Activated B cell treated with CpG ODN at 0.5 μM for 24 hours (primary cell): ENCODE measurements at regions of chr3 and their contacts with region 1.

Region 1: DNA sequence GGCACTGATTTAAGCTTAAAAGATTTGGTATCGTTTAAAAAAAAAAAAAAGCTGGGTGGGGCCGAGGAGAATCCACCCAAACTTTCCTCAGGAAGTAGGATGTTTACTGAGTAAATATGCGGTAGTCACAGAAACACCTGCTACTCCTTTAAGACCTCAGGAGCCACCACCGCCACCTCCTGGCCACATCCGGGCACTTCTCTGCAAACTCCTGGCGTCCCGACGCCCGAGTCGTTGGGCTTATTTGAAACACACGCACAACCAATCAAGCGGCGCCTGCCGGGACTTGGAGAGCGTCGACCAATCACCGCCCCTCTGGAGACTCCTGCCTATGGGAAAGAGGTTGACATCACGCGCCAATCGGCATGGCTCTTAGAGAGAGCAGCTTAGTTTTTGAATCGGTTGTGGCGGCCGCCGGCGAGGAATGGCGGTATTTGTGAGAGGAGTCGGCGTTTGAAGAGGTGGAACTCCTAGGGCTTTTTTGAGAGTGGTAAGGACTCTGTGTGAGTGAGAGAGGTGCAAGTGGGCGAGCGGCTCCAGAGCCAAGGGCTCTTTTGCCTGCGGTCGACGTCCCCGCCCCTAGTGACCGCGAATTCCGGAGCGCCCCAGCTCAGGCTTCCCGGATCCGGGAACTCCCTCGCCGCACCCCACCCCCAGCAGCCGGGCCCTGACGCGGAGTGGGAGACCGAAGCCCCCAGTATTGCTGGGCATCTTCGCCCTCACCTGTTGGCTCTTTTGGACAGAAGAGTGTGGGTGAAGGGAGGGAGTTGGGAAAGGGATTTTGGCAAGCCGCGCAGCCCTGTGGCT is at the start of gene ECT2:
- DNase-seq: peak; percentile 84
- ATAC-seq: peak; percentile 99
- H3K4me3 Mint-ChIP-seq: peak within 1 kb of the TSS; percentile 99
- H3K27ac Mint-ChIP-seq: peak within 1 kb of the TSS; percentile 91
- H3K4me1 Mint-ChIP-seq: peaks cover 14% of the 10 kb centered on the region
- H3K27me3 Mint-ChIP-seq: no peaks in the 10 kb centered on the region
- CTCF ChIP-seq: no peak
- total RNA-seq, gene ECT2: 5.0 and 6.3 TPM in 2 replicates

Region 2: GRCh38 chr3:170869645-170870593 is 1880.7 kb before region 1 on chr3 and contains the start of gene RPL22L1:
- CTCF ChIA-PET with region 1: no interaction called
- POLR2A ChIA-PET with region 1: interaction called, 4 read pairs
- intact Hi-C with region 1: loop called (anchors 5 kb)
- DNase-seq: peak; percentile 89
- ATAC-seq: peak; percentile 86
- H3K4me3 Mint-ChIP-seq: peak within 1 kb of the TSS; percentile 95
- H3K27ac Mint-ChIP-seq: peak within 1 kb of the TSS; percentile 97
- H3K4me1 Mint-ChIP-seq: peaks cover 34% of the 10 kb centered on the region
- H3K27me3 Mint-ChIP-seq: no peaks in the 10 kb centered on the region
- CTCF ChIP-seq: no peak
- total RNA-seq, gene RPL22L1: 109 and 124 TPM in 2 replicates

Region 3: GRCh38 chr3:171459942-171460724 is 1290.4 kb before region 1 on chr3 and contains the start of gene TNIK:
- CTCF ChIA-PET with region 1: no interaction called
- POLR2A ChIA-PET with region 1: no interaction called
- intact Hi-C with region 1: loop called (anchors 2 kb)
- DNase-seq: peak; percentile 66
- ATAC-seq: peak; percentile 90
- H3K4me3 Mint-ChIP-seq: peak within 1 kb of the TSS; percentile 93
- H3K27ac Mint-ChIP-seq: peak within 1 kb of the TSS; percentile 77
- H3K4me1 Mint-ChIP-seq: peaks cover 39% of the 10 kb centered on the region
- H3K27me3 Mint-ChIP-seq: peaks cover 9% of the 10 kb centered on the region
- CTCF ChIP-seq: no peak
- total RNA-seq, gene TNIK: 2.0 and 2.5 TPM in 2 replicates

Region 4: GRCh38 chr3:172511783-172512762 is 238.5 kb before region 1 on chr3:
- CTCF ChIA-PET with region 1: no interaction called
- POLR2A ChIA-PET with region 1: interaction called, 4 read pairs
- intact Hi-C with region 1: loop called (anchors 2 kb)
- DNase-seq: no peak
- ATAC-seq: peak; percentile 79
- H3K4me3 Mint-ChIP-seq: peak overlapping the region; percentile 57
- H3K27ac Mint-ChIP-seq: peak overlapping the region; percentile 84
- H3K4me1 Mint-ChIP-seq: peaks cover 64% of the 10 kb centered on the region
- H3K27me3 Mint-ChIP-seq: no peaks in the 10 kb centered on the region
- CTCF ChIP-seq: no peak

Region 5: GRCh38 chr3:172522871-172523818 is 227.4 kb before region 1 on chr3 and contains the start of gene TNFSF10:
- CTCF ChIA-PET with region 1: no interaction called
- POLR2A ChIA-PET with region 1: no interaction called
- intact Hi-C with region 1: loop called (anchors 1 kb)
- DNase-seq: peak; percentile 46
- ATAC-seq: peak; percentile 88
- H3K4me3 Mint-ChIP-seq: peak within 1 kb of the TSS; percentile 94
- H3K27ac Mint-ChIP-seq: peak within 1 kb of the TSS; percentile 93
- H3K4me1 Mint-ChIP-seq: peaks cover 51% of the 10 kb centered on the region
- H3K27me3 Mint-ChIP-seq: no peaks in the 10 kb centered on the region
- CTCF ChIP-seq: no peak
- total RNA-seq, gene TNFSF10: 7.2 and 7.4 TPM in 2 replicates

Region 6: GRCh38 chr3:172673210-172673679 is 77.3 kb before region 1 on chr3:
- CTCF ChIA-PET with region 1: interaction called, 5 read pairs
- POLR2A ChIA-PET with region 1: no interaction called
- intact Hi-C with region 1: loop called (anchors 2 kb)
- DNase-seq: no peak
- ATAC-seq: no peak
- H3K4me3 Mint-ChIP-seq: no peak overlapping the region
- H3K27ac Mint-ChIP-seq: no peak overlapping the region
- H3K4me1 Mint-ChIP-seq: peaks cover 2% of the 10 kb centered on the region
- H3K27me3 Mint-ChIP-seq: no peaks in the 10 kb centered on the region
- CTCF ChIP-seq: no peak

Region 7: GRCh38 chr3:172710664-172711453 is 39.7 kb before region 1 on chr3 and contains the start of gene NCEH1:
- CTCF ChIA-PET with region 1: interaction called, 3 read pairs
- POLR2A ChIA-PET with region 1: interaction called, 8 read pairs
- intact Hi-C with region 1: loop called (anchors 1 kb)
- DNase-seq: peak; percentile 70
- ATAC-seq: peak; percentile 100
- H3K4me3 Mint-ChIP-seq: peak within 1 kb of the TSS; percentile 97
- H3K27ac Mint-ChIP-seq: peak within 1 kb of the TSS; percentile 83
- H3K4me1 Mint-ChIP-seq: peaks cover 22% of the 10 kb centered on the region
- H3K27me3 Mint-ChIP-seq: no peaks in the 10 kb centered on the region
- CTCF ChIP-seq: no peak
- total RNA-seq, gene NCEH1: 4.5 and 4.9 TPM in 2 replicates